MCF 10A (cell line): ENCODE measurements at regions of chr4 and their contacts with region 1.

Region 1: GRCh38 chr4:154566639-154567204 is 3.9 kb downstream of the FGB start:
- DNase-seq: peak; percentile 15
- H3K4me3 Mint-ChIP-seq: no peak overlapping the region
- H3K27ac Mint-ChIP-seq: no peak overlapping the region
- H3K4me1 Mint-ChIP-seq: peaks cover 6% of the 10 kb centered on the region
- H3K27me3 Mint-ChIP-seq: no peaks in the 10 kb centered on the region
- CTCF ChIP-seq: no peak

Region 2: GRCh38 chr4:154254999-154255398 is 311.7 kb before region 1 on chr4:
- CTCF ChIA-PET with region 1: no interaction called
- POLR2A ChIA-PET with region 1: no interaction called
- intact Hi-C with region 1: no loop called
- DNase-seq: peak; percentile 6
- H3K4me3 Mint-ChIP-seq: no peak overlapping the region
- H3K27ac Mint-ChIP-seq: no peak overlapping the region
- H3K4me1 Mint-ChIP-seq: no peaks in the 10 kb centered on the region
- H3K27me3 Mint-ChIP-seq: no peaks in the 10 kb centered on the region
- CTCF ChIP-seq: peak; percentile 5

Region 3: GRCh38 chr4:154602404-154603020 is 35.8 kb after region 1 on chr4:
- CTCF ChIA-PET with region 1: no interaction called
- POLR2A ChIA-PET with region 1: no interaction called
- intact Hi-C with region 1: loop called (anchors 5 kb)
- DNase-seq: peak; percentile 60
- H3K4me3 Mint-ChIP-seq: no peak overlapping the region
- H3K27ac Mint-ChIP-seq: no peak overlapping the region
- H3K4me1 Mint-ChIP-seq: peaks cover 7% of the 10 kb centered on the region
- H3K27me3 Mint-ChIP-seq: no peaks in the 10 kb centered on the region
- CTCF ChIP-seq: no peak

Region 4: DNA sequence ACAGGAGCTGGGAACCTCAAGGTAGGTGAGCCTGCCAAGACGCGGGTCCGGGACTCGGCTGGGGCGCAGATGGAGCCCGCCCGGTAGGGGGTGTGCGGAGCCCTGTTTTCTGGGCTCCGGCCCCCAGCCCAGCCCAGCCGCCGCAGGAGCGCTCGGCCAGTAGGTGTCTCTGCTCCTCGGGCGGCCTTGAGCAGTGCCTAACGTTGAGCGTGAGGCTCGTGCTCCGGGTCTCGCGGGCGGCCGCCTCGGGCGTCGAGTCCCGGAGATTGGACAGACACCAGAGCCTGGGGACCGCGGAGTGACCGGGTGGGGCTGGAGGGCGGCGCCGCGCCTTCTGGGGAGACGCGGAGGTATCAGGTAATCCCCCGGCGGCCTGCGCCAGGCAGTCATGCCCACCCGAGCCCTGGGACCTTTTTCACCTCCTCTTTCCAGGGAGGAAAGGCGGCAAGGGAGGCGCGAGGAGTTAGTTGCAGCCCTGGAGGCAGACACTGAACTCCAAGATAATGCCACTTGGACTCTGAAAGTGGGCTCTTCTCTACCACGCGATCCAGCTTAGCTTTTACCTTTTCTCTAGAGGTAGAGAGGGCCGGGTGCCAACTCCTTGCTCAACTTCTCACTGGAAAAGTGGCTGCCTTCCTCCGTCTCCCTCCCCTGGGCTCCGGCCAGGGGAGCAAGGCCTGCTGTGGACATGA is 60.2 kb after region 1 on chr4:
- CTCF ChIA-PET with region 1: interaction called, 59 read pairs
- POLR2A ChIA-PET with region 1: interaction called, 3 read pairs
- intact Hi-C with region 1: no loop called
- DNase-seq: peak; percentile 83
- H3K4me3 Mint-ChIP-seq: no peak overlapping the region
- H3K27ac Mint-ChIP-seq: no peak overlapping the region
- H3K4me1 Mint-ChIP-seq: no peaks in the 10 kb centered on the region
- H3K27me3 Mint-ChIP-seq: no peaks in the 10 kb centered on the region
- CTCF ChIP-seq: peak; percentile 75